ENCODE measurements at regions of chr4 and their contacts with region 1.

Region 1: GRCh38 chr4:107183155-107183774 is 147.2 kb upstream of the DKK2 start:
- DNase-seq: peak; percentile 47
- H3K4me3 ChIP-seq: no peak overlapping the region
- H3K27ac ChIP-seq: no peak overlapping the region
- H3K4me1 ChIP-seq: no peaks in the 10 kb centered on the region
- H3K27me3 ChIP-seq: no peaks in the 10 kb centered on the region
- CTCF ChIP-seq: peak; percentile 79 to 86

Region 2: GRCh38 chr4:106266201-106266600 is 917.1 kb before region 1 on chr4:
- CTCF ChIA-PET with region 1: no interaction called
- dilution Hi-C with region 1: no loop called
- in situ Hi-C with region 1: no loop called
- intact Hi-C with region 1: loop called (anchors 10 kb)
- DNase-seq: peak; percentile 37
- H3K4me3 ChIP-seq: no peak overlapping the region
- H3K27ac ChIP-seq: no peak overlapping the region
- H3K4me1 ChIP-seq: no peaks in the 10 kb centered on the region
- H3K27me3 ChIP-seq: no peaks in the 10 kb centered on the region
- CTCF ChIP-seq: peak; percentile 55 to 67

Region 3: DNA sequence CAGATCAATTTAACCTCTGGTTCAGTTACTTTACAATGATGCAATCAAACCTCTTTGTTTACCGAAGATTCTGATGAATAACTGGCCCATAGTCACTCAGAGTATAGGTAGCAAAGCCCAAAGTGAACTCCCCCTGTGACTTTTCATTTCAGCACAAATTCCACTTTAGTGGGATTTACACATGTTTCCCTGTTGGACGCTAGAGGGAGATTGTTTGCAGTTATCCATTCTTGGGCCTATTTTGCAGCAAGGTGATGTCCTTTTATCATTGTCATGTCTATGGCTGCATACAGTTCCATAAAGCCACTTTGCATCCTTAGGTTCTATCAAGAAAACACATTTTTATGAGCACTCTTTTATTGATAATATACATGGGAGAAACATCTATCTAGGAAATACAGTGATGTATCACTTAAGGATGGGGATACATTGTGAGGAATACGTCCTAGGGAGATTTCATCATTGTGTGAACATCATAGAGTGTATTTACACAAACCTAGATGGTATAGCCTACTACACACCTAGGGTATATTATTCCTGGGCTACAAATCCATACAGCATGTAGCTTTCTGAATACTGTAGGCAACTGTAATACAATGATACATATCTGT is 132.6 kb before region 1 on chr4:
- CTCF ChIA-PET with region 1: no interaction called
- dilution Hi-C with region 1: no loop called
- in situ Hi-C with region 1: no loop called
- intact Hi-C with region 1: loop called (anchors 1 kb)
- DNase-seq: no peak
- H3K4me3 ChIP-seq: no peak overlapping the region
- H3K27ac ChIP-seq: no peak overlapping the region
- H3K4me1 ChIP-seq: no peaks in the 10 kb centered on the region
- H3K27me3 ChIP-seq: no peaks in the 10 kb centered on the region
- CTCF ChIP-seq: peak; percentile 74 to 78

Region 4: GRCh38 chr4:107243141-107243781 is 60.0 kb after region 1 on chr4:
- CTCF ChIA-PET with region 1: no interaction called
- dilution Hi-C with region 1: no loop called
- in situ Hi-C with region 1: no loop called
- intact Hi-C with region 1: no loop called
- DNase-seq: no peak
- H3K4me3 ChIP-seq: no peak overlapping the region
- H3K27ac ChIP-seq: no peak overlapping the region
- H3K4me1 ChIP-seq: no peaks in the 10 kb centered on the region
- H3K27me3 ChIP-seq: peaks cover 14% of the 10 kb centered on the region
- CTCF ChIP-seq: no peak

Region 5: GRCh38 chr4:107379054-107379869 is 196.0 kb after region 1 on chr4:
- CTCF ChIA-PET with region 1: interaction called, 3 read pairs
- dilution Hi-C with region 1: no loop called
- in situ Hi-C with region 1: no loop called
- intact Hi-C with region 1: loop called (anchors 5 kb)
- DNase-seq: peak; percentile 29
- H3K4me3 ChIP-seq: no peak overlapping the region
- H3K27ac ChIP-seq: peak overlapping the region; percentile 42
- H3K4me1 ChIP-seq: peaks cover 11% of the 10 kb centered on the region
- H3K27me3 ChIP-seq: no peaks in the 10 kb centered on the region
- CTCF ChIP-seq: peak in 1 of 2 donors; percentile 31

Region 6: GRCh38 chr4:107736924-107737448 is 553.7 kb after region 1 on chr4:
- CTCF ChIA-PET with region 1: no interaction called
- dilution Hi-C with region 1: no loop called
- in situ Hi-C with region 1: loop called in 1 of 2 experiments (anchors 25 kb)
- intact Hi-C with region 1: loop called (anchors 10 kb)
- DNase-seq: no peak
- H3K4me3 ChIP-seq: no peak overlapping the region
- H3K27ac ChIP-seq: no peak overlapping the region
- H3K4me1 ChIP-seq: no peaks in the 10 kb centered on the region
- H3K27me3 ChIP-seq: no peaks in the 10 kb centered on the region
- CTCF ChIP-seq: peak; percentile 79 to 83